WTC11 (cell line): ENCODE measurements at regions of chr1 and their contacts with region 1.

Region 1: GRCh38 chr1:94693029-94693428 is 127.1 kb upstream of the SLC44A3 start:
- DNase-seq: peak; percentile 61
- ATAC-seq: peak; percentile 50
- H3K4me3 Mint-ChIP-seq: no peak overlapping the region
- H3K27ac Mint-ChIP-seq: no peak overlapping the region
- H3K4me1 Mint-ChIP-seq: peaks cover 31% of the 10 kb centered on the region
- H3K27me3 Mint-ChIP-seq: no peaks in the 10 kb centered on the region; the same call in 1 of the 2 replicates
- CTCF ChIP-seq: 0 out of 2 replicates have a peak, but pooled peaks have one; percentile 35

Region 2: DNA sequence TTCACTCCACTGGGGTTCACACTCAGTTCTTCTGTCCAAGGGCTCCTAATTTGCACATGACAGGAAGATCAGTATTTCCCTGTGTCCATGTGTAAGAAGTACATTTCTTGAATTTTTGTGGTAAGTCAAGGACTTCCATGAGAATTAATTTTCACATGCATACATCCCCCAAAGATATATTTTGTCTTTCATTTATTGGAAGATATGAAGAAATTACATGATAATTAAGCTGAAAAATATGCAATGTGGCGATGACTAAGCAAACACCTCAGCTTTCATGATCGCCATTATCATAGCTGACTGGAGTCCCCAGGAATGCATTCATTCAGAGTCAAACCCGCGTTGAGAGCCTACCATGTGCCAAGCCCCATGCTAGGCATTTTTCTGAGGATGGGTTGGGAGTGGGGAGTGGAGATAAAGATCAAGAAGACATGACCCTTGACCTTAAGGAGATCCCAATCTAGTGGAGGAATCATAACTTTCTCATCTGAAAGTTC is 46.8 kb before region 1 on chr1:
- CTCF ChIA-PET with region 1: no interaction called
- POLR2A ChIA-PET with region 1: no interaction called
- DNase-seq: no peak
- ATAC-seq: no peak
- H3K4me3 Mint-ChIP-seq: no peak overlapping the region
- H3K27ac Mint-ChIP-seq: no peak overlapping the region
- H3K4me1 Mint-ChIP-seq: peaks cover 14% of the 10 kb centered on the region
- H3K27me3 Mint-ChIP-seq: no peaks in the 10 kb centered on the region
- CTCF ChIP-seq: no peak

Region 3: GRCh38 chr1:94658221-94658620 is 34.8 kb before region 1 on chr1:
- CTCF ChIA-PET with region 1: no interaction called
- POLR2A ChIA-PET with region 1: no interaction called
- DNase-seq: no peak
- ATAC-seq: peak; percentile 26
- H3K4me3 Mint-ChIP-seq: no peak overlapping the region
- H3K27ac Mint-ChIP-seq: peak overlapping the region; percentile 98
- H3K4me1 Mint-ChIP-seq: peaks cover 74% of the 10 kb centered on the region
- H3K27me3 Mint-ChIP-seq: no peaks in the 10 kb centered on the region
- CTCF ChIP-seq: no peak

Region 4: GRCh38 chr1:94669203-94669602 is 23.8 kb before region 1 on chr1:
- CTCF ChIA-PET with region 1: interaction called, 11 read pairs
- POLR2A ChIA-PET with region 1: no interaction called
- DNase-seq: no peak
- ATAC-seq: no peak
- H3K4me3 Mint-ChIP-seq: no peak overlapping the region
- H3K27ac Mint-ChIP-seq: no peak overlapping the region
- H3K4me1 Mint-ChIP-seq: peaks cover 46% of the 10 kb centered on the region
- H3K27me3 Mint-ChIP-seq: no peaks in the 10 kb centered on the region; the same call in none of the 2 replicates
- CTCF ChIP-seq: no peak